ENCODE measurements at regions of chr19 and their contacts with region 1.

Region 1: GRCh38 chr19:49869441-49870176 is 2.2 kb upstream of the PNKP start:
- DNase-seq: peak; percentile 96 to 99
- H3K4me3 ChIP-seq: peak overlapping the region; percentile 53 to 57
- H3K27ac ChIP-seq: peak overlapping the region; percentile 89 to 94
- H3K4me1 ChIP-seq: peaks cover 0 to 54% (median 41%) of the 10 kb centered on the region in 4 donors
- H3K27me3 ChIP-seq: no peaks in the 10 kb centered on the region
- CTCF ChIP-seq: peak; percentile 18 to 44

Region 2: DNA sequence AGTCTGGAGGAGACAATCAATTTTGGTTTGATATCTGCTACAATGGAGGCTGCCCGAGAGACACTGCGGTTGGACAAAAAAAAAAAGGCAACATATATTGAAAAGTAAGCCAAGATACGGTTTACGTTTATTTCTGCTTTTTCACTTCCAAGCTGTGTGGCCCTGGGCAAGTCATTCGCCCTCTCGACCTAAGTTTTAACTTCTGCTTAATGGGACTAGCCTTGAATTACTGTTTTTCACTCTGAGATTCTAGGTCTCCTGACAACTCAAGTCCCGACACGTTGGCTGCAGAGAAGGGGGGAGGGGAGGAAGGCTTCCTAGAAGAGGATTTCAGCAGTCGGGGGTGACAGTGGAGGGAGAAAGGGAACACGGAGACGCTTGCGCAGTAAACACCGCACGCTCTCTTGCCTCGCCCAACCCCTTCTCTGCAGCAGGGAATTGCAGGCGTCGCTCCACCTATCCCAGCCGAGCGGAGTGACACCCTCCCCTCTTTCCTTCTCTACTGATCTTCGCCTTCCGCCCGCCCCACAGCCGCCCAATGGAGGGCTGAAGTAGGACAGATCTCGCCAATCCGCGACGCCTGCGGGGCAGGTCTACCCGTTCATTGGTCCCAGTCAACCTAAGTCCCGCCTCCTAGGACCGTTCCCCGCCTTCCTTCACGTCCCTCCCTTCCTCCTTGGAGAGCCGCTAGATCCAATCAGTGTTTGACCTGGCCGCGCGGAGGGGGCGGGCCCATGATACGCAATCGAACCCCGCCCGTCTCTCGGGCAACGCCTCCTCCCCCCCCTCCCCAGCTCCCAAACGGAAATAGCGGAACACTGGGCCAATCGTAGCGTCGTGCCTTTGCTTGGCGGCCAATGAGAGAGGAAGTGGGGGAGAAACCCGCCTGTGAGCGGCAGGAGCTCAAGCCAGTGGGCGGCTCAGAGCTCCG is 103.3 kb before region 1 on chr19:
- intact Hi-C with region 1: loop called (anchors 10 kb)
- DNase-seq: peak; percentile 100
- H3K4me3 ChIP-seq: peak overlapping the region; percentile 87 to 99
- H3K27ac ChIP-seq: peak overlapping the region; percentile 89 to 96
- H3K4me1 ChIP-seq: peaks cover 0 to 36% (median 30%) of the 10 kb centered on the region in 4 donors
- H3K27me3 ChIP-seq: no peaks in the 10 kb centered on the region
- CTCF ChIP-seq: peak in 1 of 2 experiments; percentile 47

Region 3: GRCh38 chr19:49817964-49818648 is 51.5 kb before region 1 on chr19 and contains the start of gene MED25:
- intact Hi-C with region 1: loop called (anchors 5 kb)
- DNase-seq: peak; percentile 80 to 90
- H3K4me3 ChIP-seq: peak within 1 kb of the TSS; percentile 71 to 72
- H3K27ac ChIP-seq: peak within 1 kb of the TSS; percentile 94 to 95
- H3K4me1 ChIP-seq: peaks cover 0 to 33% (median 14%) of the 10 kb centered on the region in 4 donors
- H3K27me3 ChIP-seq: no peaks in the 10 kb centered on the region
- CTCF ChIP-seq: peak; percentile 55 to 78

Region 4: GRCh38 chr19:49850473-49851342 is 18.9 kb before region 1 on chr19 and contains the start of gene PTOV1:
- intact Hi-C with region 1: no loop called
- DNase-seq: peak; percentile 88 to 96
- H3K4me3 ChIP-seq: peak within 1 kb of the TSS; percentile 96 to 97
- H3K27ac ChIP-seq: peak within 1 kb of the TSS; percentile 99 to 100
- H3K4me1 ChIP-seq: peaks cover 0 to 40% (median 26%) of the 10 kb centered on the region in 4 donors
- H3K27me3 ChIP-seq: no peaks in the 10 kb centered on the region
- CTCF ChIP-seq: peak in 1 of 2 experiments; percentile 11

Region 5: GRCh38 chr19:50178859-50179537 is 309.4 kb after region 1 on chr19:
- intact Hi-C with region 1: no loop called
- DNase-seq: no peak
- H3K4me3 ChIP-seq: no peak overlapping the region
- H3K27ac ChIP-seq: no peak overlapping the region
- H3K4me1 ChIP-seq: no peaks in the 10 kb centered on the region
- H3K27me3 ChIP-seq: peaks cover 0 to 5% of the 10 kb centered on the region in 2 donors
- CTCF ChIP-seq: no peak

Measured in tibial artery (tissue), 4 donors.